ENCODE measurements at regions of chr19 and their contacts with region 1.

Region 1: GRCh38 chr19:43765109-43765876 is 10.5 kb upstream of the SMG9 start:
- DNase-seq: no peak
- H3K4me3 ChIP-seq: no peak overlapping the region
- H3K27ac ChIP-seq: no peak overlapping the region
- H3K4me1 ChIP-seq: no peaks in the 10 kb centered on the region
- H3K27me3 ChIP-seq: no peaks in the 10 kb centered on the region
- CTCF ChIP-seq: no peak
- POLR2A ChIP-seq: no peak

Region 2: GRCh38 chr19:43675269-43675879 is 89.9 kb before region 1 on chr19:
- intact Hi-C with region 1: loop called (anchors 10 kb)
- DNase-seq: no peak
- H3K4me3 ChIP-seq: no peak overlapping the region
- H3K27ac ChIP-seq: no peak overlapping the region
- H3K4me1 ChIP-seq: no peaks in the 10 kb centered on the region
- H3K27me3 ChIP-seq: no peaks in the 10 kb centered on the region
- CTCF ChIP-seq: no peak
- POLR2A ChIP-seq: no peak